Activated T-helper 1 cell treated with anti-CD3 and anti-CD28 coated beads, Interleukin-12 subunit alpha, Interleukin-12 subunit beta, Interleukin-2, Interleukin-4 antibody, amounts not matched to agents 30 ng/mL and 10 ng/mL and 1 ng/mL, durations not matched to agents 14 hours and 24 hours and 36 hours (primary cell): ENCODE measurements at regions of chr9 and their contacts with region 1.

Region 1: GRCh38 chr9:12204512-12204911 is 488.7 kb upstream of the TYRP1 start:
- DNase-seq: no peak
- H3K4me3 Mint-ChIP-seq: no peak overlapping the region
- H3K27ac Mint-ChIP-seq: no peak overlapping the region
- H3K4me1 Mint-ChIP-seq: no peaks in the 10 kb centered on the region
- H3K27me3 Mint-ChIP-seq: no peaks in the 10 kb centered on the region

Region 2: DNA sequence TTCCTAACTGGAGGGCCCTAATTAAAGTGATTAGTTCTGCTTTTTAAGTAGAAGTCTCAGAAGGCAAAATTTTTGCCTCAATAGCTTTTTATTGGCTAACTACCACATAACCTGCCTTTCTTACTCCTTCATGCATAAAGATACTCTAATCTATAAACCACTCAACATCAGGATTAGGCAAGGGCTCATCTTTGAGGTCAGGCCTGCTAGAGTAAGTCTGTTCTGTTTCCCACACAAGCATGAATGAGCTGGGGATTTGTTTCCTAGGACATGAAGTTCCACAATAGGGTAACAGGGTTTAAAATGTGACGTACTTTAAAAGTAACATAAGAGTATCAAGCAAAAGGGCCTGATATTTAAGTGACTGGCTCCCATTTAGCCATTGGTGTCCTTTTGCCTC is 34.1 kb before region 1 on chr9:
- intact Hi-C with region 1: no loop called
- DNase-seq: no peak
- H3K4me3 Mint-ChIP-seq: no peak overlapping the region
- H3K27ac Mint-ChIP-seq: no peak overlapping the region
- H3K4me1 Mint-ChIP-seq: no peaks in the 10 kb centered on the region
- H3K27me3 Mint-ChIP-seq: no peaks in the 10 kb centered on the region

Region 3: GRCh38 chr9:12185856-12186255 is 18.7 kb before region 1 on chr9:
- intact Hi-C with region 1: loop called (anchors 2 kb)
- DNase-seq: no peak
- H3K4me3 Mint-ChIP-seq: no peak overlapping the region
- H3K27ac Mint-ChIP-seq: no peak overlapping the region
- H3K4me1 Mint-ChIP-seq: no peaks in the 10 kb centered on the region
- H3K27me3 Mint-ChIP-seq: no peaks in the 10 kb centered on the region